ACHN (cell line): ENCODE measurements at regions of chr10 and their contacts with region 1.

Region 1: GRCh38 chr10:59606551-59606961 is 103.1 kb downstream of the SLC16A9 start:
- DNase-seq: no peak

Region 2: DNA sequence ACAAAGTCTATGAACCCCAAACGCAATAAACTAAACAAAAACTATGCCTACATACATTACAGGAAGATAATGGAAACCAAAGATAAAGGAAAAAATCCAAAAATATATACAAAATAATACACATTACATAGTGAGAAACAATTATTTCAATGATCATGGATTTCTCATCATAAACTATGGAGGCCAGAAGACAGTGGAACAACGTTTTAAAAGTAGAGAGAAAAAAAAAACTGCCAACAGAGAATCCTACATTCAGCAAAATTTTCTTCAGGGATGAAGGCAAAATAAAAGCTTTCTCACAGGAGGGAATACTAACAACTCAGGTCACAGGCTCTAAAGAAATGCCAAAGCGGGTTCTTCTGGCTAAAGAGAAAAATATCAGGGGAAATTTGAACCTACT is 201.3 kb before region 1 on chr10:
- in situ Hi-C with region 1: no loop called
- DNase-seq: no peak

Region 3: GRCh38 chr10:59808896-59809643 is 202.5 kb after region 1 on chr10:
- in situ Hi-C with region 1: loop called (anchors 25 kb)
- DNase-seq: peak; percentile 75

Region 4: DNA sequence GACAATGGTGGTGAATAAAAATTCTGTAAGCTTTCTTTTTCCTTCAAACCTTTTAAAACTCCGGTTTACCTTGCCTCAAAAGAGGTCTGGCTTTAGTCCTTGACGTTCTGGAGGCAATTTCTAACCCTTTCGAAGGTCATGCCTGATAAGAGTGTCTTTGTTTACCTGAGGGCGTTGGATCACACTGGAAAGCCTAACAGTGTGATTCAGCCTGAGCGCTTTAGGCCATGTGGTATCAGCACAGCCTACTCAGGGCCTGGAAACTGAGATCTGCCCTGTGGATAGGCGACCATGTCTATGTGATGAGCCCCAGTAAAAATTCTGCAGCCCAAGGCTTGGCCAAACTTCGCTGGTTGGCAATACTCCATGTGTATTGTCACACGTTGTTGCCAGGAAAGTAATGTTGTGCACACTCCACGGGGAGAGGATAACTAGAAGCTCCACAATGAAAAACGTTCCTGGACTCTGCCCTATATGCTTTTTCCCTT is 289.1 kb after region 1 on chr10:
- in situ Hi-C with region 1: no loop called
- DNase-seq: no peak